Dorsolateral prefrontal cortex (tissue), 120 donors: ENCODE measurements at regions of chr20 and their contacts with region 1.

Region 1: GRCh38 chr20:35344354-35344837 is 52.2 kb upstream of the FAM83C start:
- DNase-seq: no peak
- H3K4me3 ChIP-seq: no peak overlapping the region
- H3K27ac ChIP-seq: no peak overlapping the region
- H3K27me3 ChIP-seq: no peaks in the 10 kb centered on the region
- CTCF ChIP-seq: no peak

Region 2: GRCh38 chr20:35318502-35319157 is 25.8 kb before region 1 on chr20:
- intact Hi-C with region 1: loop called in 1 of 2 experiments (anchors 2 kb)
- DNase-seq: no peak
- H3K4me3 ChIP-seq: no peak overlapping the region
- H3K27ac ChIP-seq: no peak overlapping the region
- H3K27me3 ChIP-seq: no peaks in the 10 kb centered on the region
- CTCF ChIP-seq: no peak

Region 3: DNA sequence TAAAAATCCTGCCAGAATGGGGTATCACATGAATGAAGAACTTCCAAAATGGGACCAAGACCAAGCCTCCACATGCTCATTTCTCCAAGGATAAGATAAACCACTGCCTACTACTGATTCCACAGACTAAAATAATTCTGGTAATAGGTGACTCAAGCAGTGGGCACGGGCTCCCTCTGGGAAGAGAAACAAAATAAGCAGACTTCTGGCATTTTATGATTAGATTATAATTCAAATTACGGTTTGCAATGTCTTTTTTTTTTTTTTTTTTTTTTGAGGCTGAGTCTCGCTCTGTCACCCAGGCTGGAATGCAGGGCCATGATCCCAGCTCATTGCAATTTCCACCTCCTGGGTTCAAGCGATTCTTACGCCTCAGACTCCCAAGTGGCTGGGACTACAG is 51.3 kb after region 1 on chr20:
- intact Hi-C with region 1: no loop called
- DNase-seq: no peak
- H3K4me3 ChIP-seq: no peak overlapping the region
- H3K27ac ChIP-seq: no peak overlapping the region
- H3K27me3 ChIP-seq: no peaks in the 10 kb centered on the region
- CTCF ChIP-seq: no peak

Region 4: GRCh38 chr20:35527122-35527769 is 182.8 kb after region 1 on chr20:
- intact Hi-C with region 1: no loop called
- DNase-seq: no peak
- H3K4me3 ChIP-seq: no peak overlapping the region
- H3K27ac ChIP-seq: no peak overlapping the region
- H3K27me3 ChIP-seq: no peaks in the 10 kb centered on the region
- CTCF ChIP-seq: no peak